AG04449 (cell line): ENCODE measurements at regions of chr9 and their contacts with region 1.

Region 1: GRCh38 chr9:131125128-131126058 is at the start of gene NUP214:
- DNase-seq: peak; percentile 74
- H3K4me3 ChIP-seq: peak within 1 kb of the TSS; percentile 100
- CTCF ChIP-seq: no peak

Region 2: GRCh38 chr9:131053896-131054295 is 71.5 kb before region 1 on chr9:
- CTCF ChIA-PET with region 1: interaction called, 10 read pairs
- POLR2A ChIA-PET with region 1: no interaction called
- DNase-seq: no peak
- H3K4me3 ChIP-seq: no peak overlapping the region
- CTCF ChIP-seq: no peak